ENCODE measurements at regions of chr19 and their contacts with region 1.

Region 1: DNA sequence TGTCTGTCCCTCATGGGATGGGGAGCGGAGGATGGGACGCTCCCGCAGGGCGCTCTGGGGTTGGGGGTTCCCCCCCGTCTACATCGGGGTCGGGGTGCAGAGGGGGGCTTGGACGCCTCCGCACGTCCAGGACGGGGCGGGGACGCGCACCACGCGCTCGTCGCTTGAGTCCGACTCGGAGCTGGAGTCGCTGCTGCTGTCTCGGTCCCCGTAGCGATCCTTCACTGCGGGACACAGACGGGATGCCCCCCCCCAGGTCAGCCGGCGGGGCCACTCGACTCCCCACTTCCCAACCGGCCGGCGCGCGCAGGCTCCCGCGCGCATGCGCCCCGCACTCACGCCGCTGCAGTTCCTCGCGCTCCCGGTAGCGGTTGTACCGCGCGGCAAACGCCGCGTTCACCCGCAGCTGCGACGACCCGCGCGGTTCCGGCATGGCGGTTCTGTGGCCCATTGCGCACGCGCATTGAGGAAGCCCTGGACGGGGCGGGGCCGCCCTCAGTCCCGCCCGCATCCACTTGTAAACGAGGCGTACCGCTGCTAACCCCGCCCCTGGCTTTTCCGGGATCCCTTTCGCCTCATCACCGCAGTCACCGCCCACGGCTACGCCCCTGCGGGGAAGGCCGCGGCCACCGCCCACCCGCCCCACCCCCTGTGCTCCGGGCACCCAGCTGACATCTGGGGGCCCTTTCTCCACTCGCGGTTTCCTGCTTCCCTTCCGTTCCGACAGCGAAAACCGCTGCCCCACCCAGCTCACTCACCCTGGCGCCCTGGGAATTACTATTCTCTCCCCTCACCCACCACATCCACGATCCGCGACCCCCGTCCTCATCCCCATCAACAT is at the start of gene KRI1:
- DNase-seq: peak; percentile 90 to 98
- H3K4me3 ChIP-seq: peak within 1 kb of the TSS; percentile 77
- H3K27ac ChIP-seq: peak within 1 kb of the TSS; percentile 6; the same call in 1 of the 2 replicates
- H3K4me1 ChIP-seq: peaks cover 30% of the 10 kb centered on the region
- H3K27me3 ChIP-seq: no peaks in the 10 kb centered on the region
- CTCF ChIP-seq: no peak; the same call in 1 of the 2 replicates
- total RNA-seq, gene KRI1: 24.5 and 27.0 TPM in 2 replicates

Region 2: DNA sequence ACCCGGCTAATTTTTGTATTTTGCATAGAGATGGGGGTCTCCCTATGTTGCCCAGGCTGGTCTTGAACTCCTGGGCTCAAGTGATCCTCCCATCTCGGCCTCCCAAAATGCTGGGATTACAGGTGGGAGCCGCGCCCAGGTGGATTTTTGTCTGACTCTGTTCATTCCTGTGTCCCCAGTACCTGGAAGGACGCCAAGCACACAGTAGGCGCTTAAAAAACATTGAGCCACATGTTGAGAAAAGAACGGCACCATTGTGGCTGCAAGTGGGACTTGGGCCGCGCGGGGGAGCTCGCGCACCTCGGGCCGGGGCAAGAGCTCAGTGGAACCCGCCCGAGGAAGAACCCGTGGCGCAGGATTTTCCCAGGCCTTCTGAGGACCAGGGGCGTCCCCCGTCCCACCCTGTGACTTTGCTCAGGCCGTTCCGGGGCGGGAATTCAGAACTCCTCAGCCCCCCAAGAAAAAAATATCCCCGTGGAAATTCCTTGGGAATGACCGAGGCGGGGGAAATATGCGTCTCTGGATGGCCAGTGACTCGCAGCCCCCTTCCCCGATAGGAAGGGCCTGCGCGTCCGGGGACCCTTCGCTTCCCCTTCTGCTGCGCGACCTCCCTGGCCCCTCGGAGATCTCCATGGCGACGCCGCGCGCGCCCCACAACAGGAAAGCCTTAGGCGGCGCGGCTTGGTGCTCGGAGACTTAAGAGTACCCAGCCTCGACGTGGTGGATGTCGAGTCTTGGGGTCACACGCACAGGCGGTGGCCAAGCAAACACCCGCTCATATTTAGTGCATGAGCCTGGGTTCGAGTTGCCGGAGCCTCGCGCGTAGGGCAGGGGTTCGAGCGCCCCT is 296.2 kb before region 1 on chr19:
- CTCF ChIA-PET with region 1: no interaction called
- POLR2A ChIA-PET with region 1: no interaction called
- intact Hi-C with region 1: loop called (anchors 10 kb)
- DNase-seq: peak; percentile 62 to 83
- H3K4me3 ChIP-seq: peak overlapping the region; percentile 64; the same call in 1 of the 2 replicates
- H3K27ac ChIP-seq: no peak overlapping the region
- H3K4me1 ChIP-seq: peaks cover 25% of the 10 kb centered on the region
- H3K27me3 ChIP-seq: no peaks in the 10 kb centered on the region
- CTCF ChIP-seq: peak; percentile 100

Region 3: GRCh38 chr19:10403137-10404021 is 162.4 kb before region 1 on chr19 and contains the start of gene CDC37:
- CTCF ChIA-PET with region 1: no interaction called
- POLR2A ChIA-PET with region 1: no interaction called
- intact Hi-C with region 1: loop called (anchors 2 kb)
- DNase-seq: peak; percentile 90 to 96
- H3K4me3 ChIP-seq: peak within 1 kb of the TSS; percentile 89
- H3K27ac ChIP-seq: peak within 1 kb of the TSS; percentile 39
- H3K4me1 ChIP-seq: peaks cover 20% of the 10 kb centered on the region
- H3K27me3 ChIP-seq: peaks cover 21% of the 10 kb centered on the region; the same call in 1 of the 2 replicates
- CTCF ChIP-seq: no peak
- total RNA-seq, gene CDC37: 156 and 191 TPM in 2 replicates

Region 4: DNA sequence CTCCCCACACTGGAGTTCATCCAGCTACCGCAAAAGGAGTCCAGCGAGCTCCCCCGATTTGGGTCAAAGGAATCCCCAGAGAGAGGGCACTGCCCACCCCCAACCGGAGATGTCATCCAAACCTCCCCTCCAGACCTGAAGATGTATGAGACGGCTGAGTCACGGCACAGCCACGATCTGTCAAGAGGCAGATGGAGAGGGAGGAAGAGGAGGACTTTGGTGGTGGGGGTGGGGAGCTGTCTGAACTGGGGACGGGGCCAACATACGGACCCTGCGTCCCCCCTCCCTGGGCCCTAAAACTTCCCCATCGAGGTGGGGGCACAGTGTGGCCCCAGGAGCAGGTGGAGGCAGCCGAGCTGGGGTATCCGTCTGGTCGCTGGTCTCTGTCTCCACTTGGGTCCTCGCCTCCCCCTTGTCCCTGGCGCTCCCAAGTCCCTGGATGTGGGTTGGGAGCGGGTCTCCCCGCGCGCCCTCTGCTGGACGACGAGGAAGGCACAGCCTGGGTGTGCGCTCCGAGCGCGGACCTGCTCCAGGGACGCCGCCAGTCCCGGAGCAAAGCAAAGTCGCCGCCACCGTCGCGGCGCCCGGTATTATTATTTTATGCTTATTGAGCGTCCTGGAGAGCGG is 141.7 kb before region 1 on chr19:
- CTCF ChIA-PET with region 1: no interaction called
- POLR2A ChIA-PET with region 1: interaction called, 46 read pairs
- intact Hi-C with region 1: loop called (anchors 5 kb)
- DNase-seq: peak; percentile 70 to 87
- H3K4me3 ChIP-seq: peak overlapping the region; percentile 56
- H3K27ac ChIP-seq: no peak overlapping the region
- H3K4me1 ChIP-seq: peaks cover 25% of the 10 kb centered on the region; the same call in 1 of the 2 replicates
- H3K27me3 ChIP-seq: peaks cover 55% of the 10 kb centered on the region
- CTCF ChIP-seq: peak; percentile 96

Region 5: DNA sequence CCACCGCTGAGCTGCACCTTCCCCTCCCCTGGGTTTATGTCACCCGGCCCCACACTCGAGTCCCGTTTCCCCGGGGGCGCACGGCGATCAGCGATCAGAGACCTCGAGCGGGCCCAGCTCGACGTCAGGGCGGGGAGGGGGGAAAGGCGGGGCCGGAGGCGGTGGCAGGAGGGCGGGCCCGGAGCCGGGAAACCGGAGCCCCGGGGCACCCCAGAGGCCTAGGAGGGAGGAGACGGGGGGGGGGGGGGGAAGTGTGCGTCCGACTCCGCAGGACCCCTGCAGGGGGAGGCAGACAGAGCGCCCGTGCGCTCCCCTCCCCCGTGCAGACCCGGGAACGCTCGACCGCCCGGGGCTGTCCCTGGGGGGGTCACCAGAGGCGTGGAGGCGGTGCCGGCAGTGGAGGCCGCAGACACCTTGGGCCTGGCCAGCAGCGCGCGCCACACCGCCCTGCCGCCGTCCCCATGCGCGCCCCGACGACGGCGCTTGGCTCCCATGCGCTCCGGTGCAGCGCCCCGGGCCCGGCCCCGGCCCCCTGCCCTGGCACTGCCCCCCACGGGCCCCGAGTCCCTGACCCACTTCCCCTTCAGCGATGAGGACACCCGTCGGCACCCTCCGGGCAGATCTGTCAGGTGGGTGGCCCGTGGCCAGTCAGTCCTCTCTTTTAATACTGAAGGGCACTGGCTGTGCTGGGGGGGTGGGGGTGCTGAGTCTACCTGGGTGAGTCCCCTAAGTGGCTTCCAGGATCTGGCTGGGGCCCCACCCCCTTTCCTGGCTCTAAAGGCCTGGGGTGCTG is 133.6 kb before region 1 on chr19:
- CTCF ChIA-PET with region 1: no interaction called
- POLR2A ChIA-PET with region 1: interaction called, 46 read pairs
- intact Hi-C with region 1: no loop called
- DNase-seq: peak in 1 of 2 experiments; percentile 60
- H3K4me3 ChIP-seq: peak overlapping the region; percentile 43; the same call in 1 of the 2 replicates
- H3K27ac ChIP-seq: no peak overlapping the region
- H3K4me1 ChIP-seq: 0 out of 2 replicates have a peak, but pooled peaks cover 9% of the 10 kb centered on the region
- H3K27me3 ChIP-seq: peaks cover 36% of the 10 kb centered on the region
- CTCF ChIP-seq: no peak

Region 6: GRCh38 chr19:10502524-10503001 is 63.2 kb before region 1 on chr19:
- CTCF ChIA-PET with region 1: no interaction called
- POLR2A ChIA-PET with region 1: no interaction called
- intact Hi-C with region 1: loop called (anchors 1 kb)
- DNase-seq: peak; percentile 77 to 95
- H3K4me3 ChIP-seq: peak overlapping the region; percentile 82
- H3K27ac ChIP-seq: peak overlapping the region; percentile 94
- H3K4me1 ChIP-seq: peaks cover 16% of the 10 kb centered on the region
- H3K27me3 ChIP-seq: no peaks in the 10 kb centered on the region
- CTCF ChIP-seq: no peak

Region 7: GRCh38 chr19:10543420-10544241 is 22.2 kb before region 1 on chr19 and contains the start of gene ATG4D:
- CTCF ChIA-PET with region 1: no interaction called
- POLR2A ChIA-PET with region 1: interaction called, 17 read pairs
- intact Hi-C with region 1: no loop called
- DNase-seq: peak; percentile 87 to 95
- H3K4me3 ChIP-seq: peak within 1 kb of the TSS; percentile 82
- H3K27ac ChIP-seq: no peak within 1 kb of the TSS
- H3K4me1 ChIP-seq: peaks cover 6% of the 10 kb centered on the region; the same call in 1 of the 2 replicates
- H3K27me3 ChIP-seq: no peaks in the 10 kb centered on the region
- CTCF ChIP-seq: no peak
- total RNA-seq, gene ATG4D: 33.1 and 40.2 TPM in 2 replicates

Measured in PC-9 (cell line).